ENCODE measurements at regions of chr2 and their contacts with region 1.

Region 1: DNA sequence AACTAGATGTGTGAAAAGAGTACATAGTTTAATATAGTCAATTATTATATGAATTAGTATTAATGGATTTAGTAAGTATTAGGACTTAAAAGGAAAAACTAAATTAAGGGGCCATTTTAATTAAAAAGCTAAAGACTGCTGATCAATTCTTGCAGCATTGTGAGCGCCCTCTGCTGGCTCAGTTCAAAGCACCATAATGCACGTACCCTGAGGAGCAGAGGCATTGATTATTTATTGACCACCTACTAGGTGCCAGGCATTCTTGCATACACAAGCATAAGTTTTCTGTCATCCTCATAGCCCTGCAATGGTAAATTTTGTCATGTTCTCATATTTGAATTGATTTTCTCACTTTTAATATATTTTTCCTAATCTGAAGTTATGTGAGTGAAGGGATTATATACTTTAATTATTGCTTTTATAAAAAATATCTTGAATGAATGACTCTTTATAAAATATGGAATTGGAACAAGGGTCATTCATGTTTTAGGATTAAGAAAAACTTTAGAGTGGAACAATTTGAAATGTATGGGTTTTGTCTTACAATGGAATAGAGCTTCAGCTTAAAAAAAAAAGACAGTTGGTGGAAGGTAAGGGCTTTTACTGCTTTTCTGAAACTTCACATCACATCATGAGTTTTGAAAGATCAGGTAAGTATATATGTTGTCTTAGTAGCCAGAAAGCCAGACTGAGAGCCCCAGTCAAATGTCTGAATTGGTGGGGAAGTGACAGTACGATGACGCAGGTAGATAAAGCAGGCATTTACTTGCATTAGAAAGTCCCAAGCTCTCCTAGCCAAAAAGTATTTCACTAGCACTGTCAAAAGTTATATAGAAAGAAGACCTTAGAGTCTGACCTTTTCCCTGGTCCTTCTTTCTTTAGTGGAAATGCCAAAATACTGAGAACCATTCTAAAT is 9.7 kb downstream of the ITGA4 start:
- DNase-seq: peak; percentile 60 to 91 (median 76)
- ATAC-seq: no peak
- H3K4me3 ChIP-seq: no peak overlapping the region
- H3K27ac ChIP-seq: no peak overlapping the region
- H3K4me1 ChIP-seq: peaks cover 1% of the 10 kb centered on the region
- H3K27me3 ChIP-seq: no peaks in the 10 kb centered on the region

Region 2: GRCh38 chr2:181077128-181077709 is 389.7 kb before region 1 on chr2:
- intact Hi-C with region 1: loop called in 1 of 4 experiments (anchors 10 kb)
- DNase-seq: no peak
- ATAC-seq: peak in 1 of 2 donors; percentile 67
- H3K4me3 ChIP-seq: no peak overlapping the region
- H3K27ac ChIP-seq: no peak overlapping the region
- H3K4me1 ChIP-seq: no peaks in the 10 kb centered on the region
- H3K27me3 ChIP-seq: no peaks in the 10 kb centered on the region

Measured in right cardiac atrium (tissue), 5 donors.